Lower leg skin (tissue), 4 donors: ENCODE measurements at regions of chr1 and their contacts with region 1.

Region 1: DNA sequence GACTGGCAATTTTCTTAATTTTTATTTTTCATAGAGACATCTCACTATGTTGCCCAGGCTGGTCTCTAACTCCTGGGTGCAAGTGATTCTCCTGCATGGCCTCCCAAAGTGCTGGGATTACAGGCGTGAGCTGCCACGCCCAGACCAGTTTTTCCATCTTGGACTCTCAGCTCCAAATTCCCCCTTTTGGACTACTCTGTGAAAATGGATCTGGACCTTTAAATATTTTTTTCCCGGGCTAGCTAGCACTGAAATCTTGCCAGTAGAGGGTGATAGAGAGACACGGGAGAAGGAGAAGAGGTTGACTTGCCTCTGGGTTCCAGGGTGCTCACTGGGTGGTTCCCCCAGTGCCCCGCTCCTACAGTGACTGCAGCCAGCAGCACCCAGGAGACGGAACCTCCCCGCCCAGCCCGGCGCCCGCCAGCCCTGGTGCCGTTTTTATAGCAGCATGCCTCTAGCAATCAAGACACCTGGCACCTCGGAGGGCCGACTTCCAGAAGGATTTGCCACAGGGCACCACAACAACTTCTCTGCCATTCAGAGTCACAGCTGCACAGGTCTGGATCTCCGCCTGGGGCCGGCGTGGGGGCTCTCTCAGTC is 34.7 kb upstream of the SCCPDH start:
- DNase-seq: peak; percentile 55 to 92
- H3K4me3 ChIP-seq: no peak overlapping the region
- CTCF ChIP-seq: no peak
- POLR2A ChIP-seq: no peak

Region 2: DNA sequence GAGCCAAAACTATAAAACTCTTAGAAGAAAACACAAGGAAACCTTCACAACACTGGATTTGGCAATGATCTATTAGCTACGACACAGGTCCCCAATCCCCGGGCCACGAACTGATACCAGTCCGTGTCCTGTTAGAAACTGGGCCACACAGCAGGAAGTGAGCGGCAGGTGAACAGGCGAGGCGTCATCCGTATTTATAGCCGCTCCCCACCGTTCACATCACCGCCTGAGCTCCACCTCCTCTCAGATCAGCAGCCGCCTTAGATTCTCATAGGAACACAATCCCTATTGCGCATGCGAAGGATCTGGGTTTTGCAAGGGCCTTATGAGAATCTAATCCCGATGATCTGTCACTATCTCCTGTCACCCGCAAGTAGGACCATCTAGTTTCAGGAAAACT is 135.3 kb before region 1 on chr1:
- intact Hi-C with region 1: no loop called
- DNase-seq: peak in 1 of 2 donors; percentile 21
- H3K4me3 ChIP-seq: no peak overlapping the region
- CTCF ChIP-seq: no peak
- POLR2A ChIP-seq: no peak

Region 3: GRCh38 chr1:246753670-246754535 is 64.4 kb after region 1 on chr1:
- intact Hi-C with region 1: loop called (anchors 5 kb)
- DNase-seq: peak; percentile 29 to 87
- H3K4me3 ChIP-seq: no peak overlapping the region
- CTCF ChIP-seq: no peak
- POLR2A ChIP-seq: no peak

Region 4: GRCh38 chr1:246773213-246773641 is 83.7 kb after region 1 on chr1:
- intact Hi-C with region 1: no loop called
- DNase-seq: no peak
- H3K4me3 ChIP-seq: no peak overlapping the region
- CTCF ChIP-seq: no peak
- POLR2A ChIP-seq: no peak